Activated CD4-positive, alpha-beta T cell treated with anti-CD3 and anti-CD28 coated beads, Interleukin-2, amount 10 ng/mL, durations not matched to agents 24 days and 14 days (primary cell): ENCODE measurements at regions of chr10 and their contacts with region 1.

Region 1: GRCh38 chr10:5293691-5294550 is 70.8 kb upstream of the UCN3 start:
- DNase-seq: peak; percentile 93
- H3K4me3 Mint-ChIP-seq: peak overlapping the region; percentile 86
- H3K27ac Mint-ChIP-seq: peak overlapping the region; percentile 99
- H3K4me1 Mint-ChIP-seq: peaks cover 66% of the 10 kb centered on the region
- H3K27me3 Mint-ChIP-seq: no peaks in the 10 kb centered on the region

Region 2: DNA sequence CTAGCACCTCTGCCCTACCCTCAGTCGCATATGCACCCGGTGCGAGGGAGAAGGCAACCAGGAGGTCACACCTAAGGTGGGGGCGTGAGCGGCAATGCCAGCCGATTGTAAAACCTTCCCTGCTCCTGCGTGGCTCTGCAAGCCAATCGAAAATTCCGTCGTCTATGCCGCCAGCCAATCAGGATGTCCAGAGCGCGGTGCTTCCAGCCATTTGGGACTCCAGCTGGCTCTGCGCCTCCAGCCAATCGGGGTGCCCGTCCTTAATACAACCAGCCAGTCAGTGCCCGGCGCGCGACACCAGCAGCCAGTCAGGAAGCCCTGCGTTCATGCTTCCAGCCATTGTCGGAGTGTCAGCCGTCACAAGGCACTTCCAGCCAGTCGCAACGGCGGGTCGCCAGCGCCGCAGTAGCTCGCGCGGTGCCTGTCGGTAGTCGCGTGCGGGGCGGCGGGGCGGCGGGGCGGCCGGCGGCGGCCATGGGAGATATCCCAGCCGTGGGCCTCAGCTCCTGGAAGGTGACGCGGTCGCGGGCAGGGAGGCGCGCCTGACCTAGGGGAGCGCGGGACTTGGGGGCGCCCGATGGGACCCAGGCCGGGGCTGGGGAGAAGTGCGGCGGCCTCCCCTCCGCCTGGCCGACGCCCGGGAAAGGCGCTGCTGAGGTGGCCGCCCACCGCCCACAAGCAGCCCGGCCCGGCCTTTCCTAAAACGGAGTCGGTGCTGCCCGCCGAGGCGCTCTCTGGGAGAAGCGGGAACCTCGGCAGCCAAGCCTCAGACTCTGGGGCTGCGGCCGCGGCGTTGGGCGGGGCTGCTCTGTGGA is 467.9 kb before region 1 on chr10 and contains the start of gene AKR1E2:
- intact Hi-C with region 1: loop called (anchors 5 kb)
- DNase-seq: peak; percentile 95
- H3K4me3 Mint-ChIP-seq: peak within 1 kb of the TSS; percentile 87
- H3K27ac Mint-ChIP-seq: peak within 1 kb of the TSS; percentile 81
- H3K4me1 Mint-ChIP-seq: peaks cover 20% of the 10 kb centered on the region
- H3K27me3 Mint-ChIP-seq: peaks cover 34% of the 10 kb centered on the region
- total RNA-seq, gene AKR1E2: 6.6 and 7.9 TPM in 2 replicates

Region 3: GRCh38 chr10:4867520-4868356 is 426.2 kb before region 1 on chr10:
- intact Hi-C with region 1: no loop called
- DNase-seq: no peak
- H3K4me3 Mint-ChIP-seq: no peak overlapping the region
- H3K27ac Mint-ChIP-seq: no peak overlapping the region
- H3K4me1 Mint-ChIP-seq: peaks cover 4% of the 10 kb centered on the region
- H3K27me3 Mint-ChIP-seq: no peaks in the 10 kb centered on the region

Region 4: GRCh38 chr10:5283305-5284158 is 10.4 kb before region 1 on chr10:
- intact Hi-C with region 1: loop called (anchors 1 kb)
- DNase-seq: peak; percentile 89
- H3K4me3 Mint-ChIP-seq: peak overlapping the region; percentile 44
- H3K27ac Mint-ChIP-seq: peak overlapping the region; percentile 82
- H3K4me1 Mint-ChIP-seq: peaks cover 29% of the 10 kb centered on the region
- H3K27me3 Mint-ChIP-seq: peaks cover 5% of the 10 kb centered on the region

Region 5: GRCh38 chr10:5317547-5318107 is 23.7 kb after region 1 on chr10:
- intact Hi-C with region 1: loop called (anchors 1 kb)
- DNase-seq: peak; percentile 85
- H3K4me3 Mint-ChIP-seq: peak overlapping the region; percentile 68
- H3K27ac Mint-ChIP-seq: peak overlapping the region; percentile 73
- H3K4me1 Mint-ChIP-seq: peaks cover 43% of the 10 kb centered on the region
- H3K27me3 Mint-ChIP-seq: no peaks in the 10 kb centered on the region

Region 6: GRCh38 chr10:5434017-5434753 is 140.3 kb after region 1 on chr10:
- intact Hi-C with region 1: loop called (anchors 5 kb)
- DNase-seq: peak; percentile 73
- H3K4me3 Mint-ChIP-seq: peak overlapping the region; percentile 10
- H3K27ac Mint-ChIP-seq: peak overlapping the region; percentile 70
- H3K4me1 Mint-ChIP-seq: peaks cover 15% of the 10 kb centered on the region
- H3K27me3 Mint-ChIP-seq: no peaks in the 10 kb centered on the region

Region 7: GRCh38 chr10:5623081-5623748 is 329.3 kb after region 1 on chr10:
- intact Hi-C with region 1: loop called (anchors 5 kb)
- DNase-seq: peak; percentile 95
- H3K4me3 Mint-ChIP-seq: no peak overlapping the region
- H3K27ac Mint-ChIP-seq: no peak overlapping the region
- H3K4me1 Mint-ChIP-seq: peaks cover 5% of the 10 kb centered on the region
- H3K27me3 Mint-ChIP-seq: no peaks in the 10 kb centered on the region